ENCODE measurements at regions of chr22 and their contacts with region 1.

Region 1: DNA sequence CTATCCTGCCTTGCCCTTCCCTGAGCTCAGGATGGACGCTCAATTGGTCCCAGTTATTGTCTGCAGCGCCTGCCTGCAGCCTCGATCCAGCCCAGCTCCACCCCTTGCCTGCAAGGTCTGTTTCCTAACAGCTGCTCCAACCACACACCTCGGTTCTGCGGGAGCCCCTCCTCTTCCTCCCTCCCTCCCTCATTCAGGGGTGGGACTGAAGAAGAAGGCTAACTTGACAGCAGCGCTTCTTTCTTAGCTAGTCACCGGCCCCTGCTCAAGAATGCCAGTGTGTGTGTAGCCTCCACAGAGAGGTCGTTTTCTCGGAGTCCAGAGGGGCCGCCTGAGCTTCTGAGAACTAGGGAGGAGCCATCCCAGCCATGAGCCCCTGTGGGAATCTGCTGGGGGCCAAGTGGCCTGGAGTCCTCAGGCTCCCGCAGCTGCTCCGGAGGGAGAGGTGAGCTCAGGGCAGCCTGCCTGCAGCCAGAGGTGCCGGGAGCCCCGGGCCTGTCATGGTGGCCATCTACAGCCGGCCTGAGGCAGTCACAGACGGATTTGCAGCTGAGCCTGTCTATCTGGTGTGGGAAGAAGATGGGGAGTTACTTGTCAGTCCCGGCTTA is 36.1 kb downstream of the LIMK2 start:
- DNase-seq: peak; percentile 50 to 84 (median 70)
- ATAC-seq: peak; percentile 100
- H3K4me3 Mint-ChIP-seq: peak overlapping the region; percentile 73 to 90 (median 84)
- H3K27ac Mint-ChIP-seq: peak overlapping the region; percentile 40 to 92 (median 85)
- H3K4me1 Mint-ChIP-seq: peaks cover 8 to 43% (median 21%) of the 10 kb centered on the region in 4 donors
- H3K27me3 Mint-ChIP-seq: no peaks in the 10 kb centered on the region

Region 2: GRCh38 chr22:31192513-31192912 is 55.7 kb before region 1 on chr22:
- POLR2A ChIA-PET with region 1: no interaction called
- DNase-seq: no peak
- ATAC-seq: no peak
- H3K4me3 Mint-ChIP-seq: no peak overlapping the region
- H3K27ac Mint-ChIP-seq: peak overlapping the region in 3 of 10 donors; percentile 24 to 70 (median 25)
- H3K4me1 Mint-ChIP-seq: peaks cover 0 to 9% (median 6%) of the 10 kb centered on the region in 4 donors
- H3K27me3 Mint-ChIP-seq: no peaks in the 10 kb centered on the region

Region 3: DNA sequence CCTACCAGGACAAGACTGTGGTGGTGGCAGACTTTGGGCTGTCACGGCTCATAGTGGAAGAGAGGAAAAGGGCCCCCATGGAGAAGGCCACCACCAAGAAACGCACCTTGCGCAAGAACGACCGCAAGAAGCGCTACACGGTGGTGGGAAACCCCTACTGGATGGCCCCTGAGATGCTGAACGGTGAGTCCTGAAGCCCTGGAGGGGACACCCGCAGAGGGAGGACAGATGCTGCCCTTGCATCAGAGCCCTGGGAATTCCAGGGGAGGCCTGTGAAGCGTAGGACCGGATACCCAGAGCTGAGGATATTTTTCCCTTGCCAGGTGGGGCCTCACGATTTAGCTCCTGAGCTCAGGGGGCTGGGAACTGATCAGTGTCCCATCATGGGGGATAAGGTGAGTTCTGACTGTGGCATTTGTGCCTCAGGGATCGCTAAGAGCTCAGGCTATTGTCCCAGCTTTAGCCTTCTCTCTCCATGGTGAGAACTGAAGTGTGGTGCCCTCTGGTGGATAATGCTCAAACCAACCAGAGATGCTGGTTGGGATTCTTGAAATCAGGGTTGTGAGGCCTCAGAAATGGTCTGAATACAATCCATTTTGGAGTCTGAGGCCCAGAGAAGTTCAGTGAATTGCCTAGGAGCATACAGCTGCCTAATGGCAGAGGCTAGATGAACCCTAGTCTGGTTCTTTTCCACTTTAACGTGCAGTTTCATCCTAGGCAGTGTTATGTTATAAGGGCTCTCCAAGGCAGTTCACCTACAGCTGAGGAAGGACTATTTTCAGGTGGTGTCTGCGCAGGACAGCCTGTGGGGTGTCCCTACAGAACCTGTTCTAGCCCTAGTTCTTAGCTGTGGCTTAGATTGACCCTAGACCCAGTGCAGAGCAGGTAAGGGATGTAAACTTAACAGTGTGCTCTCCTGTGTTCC is 24.5 kb after region 1 on chr22:
- POLR2A ChIA-PET with region 1: interaction called, 34 read pairs
- DNase-seq: peak in 7 of 10 donors; percentile 49 to 77 (median 53)
- ATAC-seq: peak; percentile 65 to 66
- H3K4me3 Mint-ChIP-seq: peak overlapping the region in 8 of 10 donors; percentile 7 to 66 (median 24)
- H3K27ac Mint-ChIP-seq: peak overlapping the region; percentile 89 to 97 (median 94)
- H3K4me1 Mint-ChIP-seq: peaks cover 42 to 82% (median 73%) of the 10 kb centered on the region in 4 donors
- H3K27me3 Mint-ChIP-seq: no peaks in the 10 kb centered on the region

Measured in naive thymus-derived CD8-positive, alpha-beta T cell (primary cell).